Activated T-helper 1 cell treated with anti-CD3 and anti-CD28 coated beads, Interleukin-12 subunit alpha, Interleukin-12 subunit beta, Interleukin-2, Interleukin-4 antibody, amounts not matched to agents 30 ng/mL and 10 ng/mL and 1 ng/mL, durations not matched to agents 14 hours and 24 hours and 36 hours (primary cell): ENCODE measurements at regions of chr11 and their contacts with region 1.

Region 1: GRCh38 chr11:72413914-72414628 is 20.3 kb downstream of the CLPB start:
- DNase-seq: peak; percentile 64
- H3K4me3 Mint-ChIP-seq: no peak overlapping the region
- H3K27ac Mint-ChIP-seq: no peak overlapping the region
- H3K4me1 Mint-ChIP-seq: peaks cover 31% of the 10 kb centered on the region
- H3K27me3 Mint-ChIP-seq: no peaks in the 10 kb centered on the region

Region 2: GRCh38 chr11:72179804-72180396 is 234.2 kb before region 1 on chr11:
- intact Hi-C with region 1: loop called (anchors 5 kb)
- DNase-seq: no peak
- H3K4me3 Mint-ChIP-seq: no peak overlapping the region
- H3K27ac Mint-ChIP-seq: no peak overlapping the region
- H3K4me1 Mint-ChIP-seq: peaks cover 5% of the 10 kb centered on the region
- H3K27me3 Mint-ChIP-seq: peaks cover 9% of the 10 kb centered on the region

Region 3: DNA sequence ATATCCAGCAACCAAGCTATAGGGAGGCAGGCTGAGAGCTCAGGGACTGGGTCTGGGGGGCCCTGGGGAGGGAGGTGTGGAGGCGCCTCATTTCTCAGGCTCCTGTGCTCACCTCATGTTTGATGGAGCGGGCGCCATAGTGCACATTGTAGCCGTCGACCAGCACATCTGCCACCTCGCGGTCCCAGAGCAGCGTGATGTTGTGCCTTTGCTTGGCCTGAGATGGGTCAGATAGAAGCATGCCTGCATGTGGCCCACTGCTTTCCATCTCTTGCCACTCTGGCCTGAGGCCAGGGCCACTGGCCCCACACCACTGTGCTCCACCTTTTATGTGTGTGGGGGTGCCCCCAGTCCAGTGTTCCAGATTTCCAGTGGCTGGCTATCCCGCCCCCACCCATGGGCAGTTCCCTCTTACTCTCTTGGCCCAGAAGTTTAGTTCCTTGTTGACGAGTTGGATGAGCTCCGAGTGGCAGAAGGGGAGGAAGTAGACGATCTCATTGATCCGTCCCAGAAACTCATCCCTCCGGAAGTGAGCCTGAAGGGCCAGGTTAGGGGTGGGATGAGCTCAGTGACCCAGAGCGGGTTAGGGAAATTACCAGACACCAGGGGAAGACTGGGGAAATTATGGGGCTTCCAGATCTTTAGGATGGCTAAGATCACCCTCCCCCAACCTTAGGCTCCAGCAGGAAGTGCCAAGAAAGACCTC is 120.0 kb before region 1 on chr11:
- intact Hi-C with region 1: loop called (anchors 1 kb)
- DNase-seq: no peak
- H3K4me3 Mint-ChIP-seq: no peak overlapping the region
- H3K27ac Mint-ChIP-seq: no peak overlapping the region
- H3K4me1 Mint-ChIP-seq: no peaks in the 10 kb centered on the region
- H3K27me3 Mint-ChIP-seq: no peaks in the 10 kb centered on the region

Region 4: GRCh38 chr11:72326151-72326848 is 87.8 kb before region 1 on chr11:
- intact Hi-C with region 1: loop called (anchors 2 kb)
- DNase-seq: no peak
- H3K4me3 Mint-ChIP-seq: no peak overlapping the region
- H3K27ac Mint-ChIP-seq: peak overlapping the region; percentile 91
- H3K4me1 Mint-ChIP-seq: peaks cover 39% of the 10 kb centered on the region
- H3K27me3 Mint-ChIP-seq: no peaks in the 10 kb centered on the region

Region 5: DNA sequence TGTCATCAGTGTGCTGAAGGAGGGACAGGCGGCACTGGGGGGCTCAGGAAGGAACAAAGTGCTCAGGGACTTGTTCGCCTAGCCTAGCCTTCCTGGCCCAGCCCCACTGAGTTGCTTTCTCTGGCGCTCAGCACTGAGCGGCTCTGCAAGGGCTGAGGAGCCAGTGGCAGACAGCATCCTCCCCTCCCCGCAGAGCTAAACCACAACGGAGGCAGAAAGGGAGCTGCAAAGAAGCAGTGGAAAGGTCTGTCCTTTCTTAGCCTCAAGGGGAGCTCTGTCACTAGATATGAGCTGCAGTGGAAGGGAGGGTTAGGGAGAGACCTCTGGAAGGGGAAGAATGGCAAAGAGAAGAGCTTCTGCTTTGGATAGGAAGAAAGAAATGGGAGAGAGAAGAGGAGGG is 80.4 kb before region 1 on chr11:
- intact Hi-C with region 1: loop called (anchors 1 kb)
- DNase-seq: peak; percentile 47
- H3K4me3 Mint-ChIP-seq: no peak overlapping the region
- H3K27ac Mint-ChIP-seq: peak overlapping the region; percentile 25
- H3K4me1 Mint-ChIP-seq: peaks cover 35% of the 10 kb centered on the region
- H3K27me3 Mint-ChIP-seq: no peaks in the 10 kb centered on the region

Region 6: GRCh38 chr11:72352859-72353551 is 61.1 kb before region 1 on chr11:
- intact Hi-C with region 1: loop called (anchors 5 kb)
- DNase-seq: no peak
- H3K4me3 Mint-ChIP-seq: no peak overlapping the region
- H3K27ac Mint-ChIP-seq: no peak overlapping the region
- H3K4me1 Mint-ChIP-seq: no peaks in the 10 kb centered on the region
- H3K27me3 Mint-ChIP-seq: no peaks in the 10 kb centered on the region

Region 7: DNA sequence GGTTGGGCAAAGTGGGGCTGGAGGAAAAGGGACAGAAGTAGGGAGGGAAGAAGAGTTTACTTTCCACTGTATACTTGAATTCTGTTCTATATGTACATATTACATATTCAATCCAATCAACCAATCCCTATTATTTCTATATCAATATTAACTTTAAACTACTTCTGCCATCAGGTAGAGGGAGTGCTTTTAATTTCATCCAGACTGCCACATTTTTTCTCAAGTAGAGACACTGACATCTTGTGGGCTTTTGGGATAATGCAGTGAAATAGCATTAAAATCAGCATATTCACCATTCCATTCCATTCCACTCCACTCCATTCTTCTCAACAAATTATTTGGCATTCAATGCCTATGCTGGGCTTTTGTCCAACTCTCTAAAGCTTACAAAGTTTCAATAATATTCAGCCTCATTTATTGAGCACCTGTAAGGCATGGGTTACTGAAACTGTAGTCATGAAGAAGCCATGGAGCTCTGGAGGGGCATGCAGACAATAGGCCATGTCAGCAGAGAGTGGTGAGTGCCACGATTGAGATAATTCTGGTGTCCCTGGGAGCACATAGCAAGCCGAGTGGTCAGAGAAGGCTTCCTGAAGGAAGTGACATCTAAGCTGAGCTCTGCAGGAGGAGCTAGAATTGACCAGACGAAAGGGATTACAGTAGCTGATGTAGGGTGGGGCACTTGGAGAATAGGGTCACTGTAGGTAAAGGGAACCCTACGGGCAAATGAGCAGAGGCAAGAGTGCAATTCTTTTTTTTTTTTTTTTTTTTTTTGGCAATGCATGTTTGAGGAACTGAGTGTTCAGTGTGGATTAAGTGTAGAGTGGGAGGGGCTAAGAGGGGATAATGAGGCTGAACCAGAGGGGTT is 33.1 kb after region 1 on chr11:
- intact Hi-C with region 1: no loop called
- DNase-seq: no peak
- H3K4me3 Mint-ChIP-seq: no peak overlapping the region
- H3K27ac Mint-ChIP-seq: no peak overlapping the region
- H3K4me1 Mint-ChIP-seq: no peaks in the 10 kb centered on the region
- H3K27me3 Mint-ChIP-seq: peaks cover 27% of the 10 kb centered on the region